Mammary epithelial cell (primary cell): ENCODE measurements at regions of chr5 and their contacts with region 1.

Region 1: GRCh38 chr5:3740546-3741373 is 145.1 kb downstream of the IRX1 start:
- DNase-seq: peak; percentile 95
- H3K4me3 ChIP-seq: no peak overlapping the region
- H3K27ac ChIP-seq: peak overlapping the region; percentile 95
- H3K4me1 ChIP-seq: peaks cover 28% of the 10 kb centered on the region
- H3K27me3 ChIP-seq: no peaks in the 10 kb centered on the region
- CTCF ChIP-seq: no peak

Region 2: DNA sequence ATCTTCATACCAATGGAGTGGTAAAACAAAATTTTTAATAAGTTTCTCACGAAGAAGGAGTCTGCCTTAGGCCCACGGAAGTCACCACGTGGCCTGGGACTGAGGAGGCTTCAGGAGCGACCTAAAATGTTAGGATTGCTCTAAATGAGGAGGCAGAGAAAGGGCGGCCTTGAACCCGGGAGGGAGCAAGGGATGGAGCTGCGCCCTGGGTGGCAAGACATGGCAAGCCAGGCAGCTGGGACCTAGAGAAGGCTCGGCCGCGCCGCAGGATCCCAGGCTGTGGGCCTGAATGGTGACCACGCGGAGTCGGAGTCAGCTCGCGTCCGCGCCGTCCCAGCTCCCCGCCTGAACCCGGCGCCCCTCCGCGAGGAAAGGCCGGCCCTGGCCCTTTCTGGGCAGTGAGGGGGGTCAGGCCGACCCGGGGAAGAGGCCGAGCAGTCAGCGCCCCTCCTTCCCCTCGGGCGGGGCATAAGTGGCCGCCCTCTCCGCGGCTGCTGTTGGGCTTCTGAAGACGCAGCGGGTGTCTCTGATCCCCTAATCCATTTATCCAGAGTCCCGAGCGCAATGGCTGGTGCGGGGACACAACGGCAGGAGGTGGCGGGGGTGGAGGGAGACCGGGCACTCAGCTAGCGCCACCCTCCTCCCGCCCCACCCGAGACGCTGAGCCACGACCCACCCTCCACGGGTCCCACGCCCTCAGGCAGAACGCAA is 134.5 kb before region 1 on chr5:
- CTCF ChIA-PET with region 1: no interaction called
- dilution Hi-C with region 1: no loop called
- in situ Hi-C with region 1: no loop called
- intact Hi-C with region 1: no loop called
- DNase-seq: no peak
- H3K4me3 ChIP-seq: peak overlapping the region; percentile 19 to 42 (median 35)
- H3K27ac ChIP-seq: peak overlapping the region; percentile 72
- H3K4me1 ChIP-seq: peaks cover 88% of the 10 kb centered on the region
- H3K27me3 ChIP-seq: no peaks in the 10 kb centered on the region
- CTCF ChIP-seq: no peak

Region 3: GRCh38 chr5:3694819-3695218 is 45.9 kb before region 1 on chr5:
- CTCF ChIA-PET with region 1: no interaction called
- dilution Hi-C with region 1: no loop called
- in situ Hi-C with region 1: no loop called
- intact Hi-C with region 1: loop called (anchors 1 kb)
- DNase-seq: peak; percentile 93
- H3K4me3 ChIP-seq: no peak overlapping the region
- H3K27ac ChIP-seq: peak overlapping the region; percentile 45
- H3K4me1 ChIP-seq: peaks cover 17% of the 10 kb centered on the region
- H3K27me3 ChIP-seq: no peaks in the 10 kb centered on the region
- CTCF ChIP-seq: no peak

Region 4: GRCh38 chr5:4137781-4138180 is 397.0 kb after region 1 on chr5:
- CTCF ChIA-PET with region 1: no interaction called
- dilution Hi-C with region 1: no loop called
- in situ Hi-C with region 1: no loop called
- intact Hi-C with region 1: no loop called
- DNase-seq: no peak
- H3K4me3 ChIP-seq: no peak overlapping the region
- H3K27ac ChIP-seq: no peak overlapping the region
- H3K4me1 ChIP-seq: no peaks in the 10 kb centered on the region
- H3K27me3 ChIP-seq: no peaks in the 10 kb centered on the region
- CTCF ChIP-seq: no peak